Activated T-helper 2 cell treated with anti-CD3 and anti-CD28 coated beads, Interferon-gamma antibody, Interleukin-2, Interleukin-4, amounts not matched to agents 10 μg/mL and 5 μg/mL and 100 μg/mL, durations not matched to agents 14 hours and 24 hours and 36 hours (primary cell): ENCODE measurements at regions of chr6 and their contacts with region 1.

Region 1: DNA sequence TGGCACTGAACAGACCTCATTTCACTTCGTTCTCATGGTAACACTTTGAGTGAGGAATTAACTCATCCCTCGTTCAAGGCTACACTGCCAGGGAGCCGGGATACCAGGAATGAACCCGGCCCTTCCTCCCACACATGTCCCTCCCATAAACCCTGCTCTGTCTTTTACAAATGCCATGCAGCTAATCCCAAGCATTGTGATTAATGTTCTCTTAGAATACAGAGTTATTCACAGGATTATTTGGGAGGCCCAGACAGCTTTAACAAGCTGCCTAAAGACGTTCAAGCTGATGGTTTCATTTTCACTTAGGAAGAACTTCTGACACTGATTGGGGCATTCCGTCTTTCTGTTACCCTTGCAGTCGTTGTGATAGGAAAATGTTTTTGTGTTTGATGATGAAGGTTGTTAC is 42.5 kb upstream of the CD83 start:
- DNase-seq: no peak
- H3K4me3 Mint-ChIP-seq: peak overlapping the region; percentile 82
- H3K27ac Mint-ChIP-seq: peak overlapping the region; percentile 95
- H3K4me1 Mint-ChIP-seq: peaks cover 58% of the 10 kb centered on the region
- H3K27me3 Mint-ChIP-seq: no peaks in the 10 kb centered on the region

Region 2: DNA sequence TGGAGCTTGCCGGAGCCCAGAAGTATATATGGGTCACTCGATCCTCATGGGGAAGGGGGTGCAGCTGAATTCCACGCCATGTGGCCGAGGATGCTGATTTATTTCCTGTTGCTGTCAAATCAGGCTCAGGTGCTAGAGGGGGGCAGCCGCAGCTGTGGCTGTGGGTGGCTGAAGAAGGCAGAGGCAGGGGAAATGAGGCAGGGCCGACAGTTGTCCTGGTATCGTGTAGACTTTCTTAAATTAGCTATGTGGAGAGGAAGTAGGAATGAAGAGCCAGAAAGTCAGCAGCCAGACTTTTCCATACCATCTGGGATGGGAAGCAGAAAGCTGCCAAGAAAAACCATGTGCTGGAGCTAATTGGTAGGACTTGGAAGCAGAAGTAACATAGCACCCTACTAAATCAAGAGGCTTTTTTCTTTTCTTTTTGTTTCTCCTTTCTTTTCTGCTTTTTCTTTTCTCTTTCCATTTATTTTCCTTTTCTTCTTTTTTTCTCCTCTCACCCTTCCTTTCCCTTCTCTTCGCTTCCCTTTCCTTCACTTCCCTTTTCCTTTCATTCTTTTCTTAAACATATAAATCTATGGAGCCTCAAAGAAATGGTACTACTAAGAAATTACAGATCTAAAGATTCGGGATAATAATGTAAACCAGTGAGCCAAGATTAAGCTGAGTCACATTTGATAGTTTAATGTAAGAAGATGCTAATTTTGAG is 48.1 kb before region 1 on chr6:
- intact Hi-C with region 1: no loop called
- DNase-seq: no peak
- H3K4me3 Mint-ChIP-seq: no peak overlapping the region
- H3K27ac Mint-ChIP-seq: no peak overlapping the region
- H3K4me1 Mint-ChIP-seq: peaks cover 4% of the 10 kb centered on the region
- H3K27me3 Mint-ChIP-seq: peaks cover 51% of the 10 kb centered on the region

Region 3: DNA sequence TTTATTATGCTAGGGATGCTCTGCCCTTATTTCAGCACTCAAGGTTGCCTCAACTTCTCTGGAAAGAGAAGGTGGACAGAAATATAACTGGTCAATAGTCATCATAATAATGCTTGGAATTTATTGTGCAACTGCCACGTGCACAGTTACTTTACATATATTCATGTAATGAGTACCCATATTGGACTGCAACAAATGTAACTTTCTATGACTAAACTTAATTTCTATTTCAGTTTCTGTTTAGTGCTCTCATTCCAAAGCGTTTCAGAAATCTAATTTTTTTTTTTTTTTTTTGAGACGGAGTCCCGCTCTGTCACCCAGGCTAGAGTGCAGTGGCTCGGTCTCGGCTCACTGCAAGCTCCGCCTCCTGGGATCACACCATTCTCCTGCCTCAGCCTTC is 14.1 kb after region 1 on chr6:
- intact Hi-C with region 1: loop called (anchors 1 kb)
- DNase-seq: no peak
- H3K4me3 Mint-ChIP-seq: no peak overlapping the region
- H3K27ac Mint-ChIP-seq: no peak overlapping the region
- H3K4me1 Mint-ChIP-seq: peaks cover 39% of the 10 kb centered on the region
- H3K27me3 Mint-ChIP-seq: peaks cover 4% of the 10 kb centered on the region